ENCODE measurements at regions of chr19 and their contacts with region 1.

Region 1: DNA sequence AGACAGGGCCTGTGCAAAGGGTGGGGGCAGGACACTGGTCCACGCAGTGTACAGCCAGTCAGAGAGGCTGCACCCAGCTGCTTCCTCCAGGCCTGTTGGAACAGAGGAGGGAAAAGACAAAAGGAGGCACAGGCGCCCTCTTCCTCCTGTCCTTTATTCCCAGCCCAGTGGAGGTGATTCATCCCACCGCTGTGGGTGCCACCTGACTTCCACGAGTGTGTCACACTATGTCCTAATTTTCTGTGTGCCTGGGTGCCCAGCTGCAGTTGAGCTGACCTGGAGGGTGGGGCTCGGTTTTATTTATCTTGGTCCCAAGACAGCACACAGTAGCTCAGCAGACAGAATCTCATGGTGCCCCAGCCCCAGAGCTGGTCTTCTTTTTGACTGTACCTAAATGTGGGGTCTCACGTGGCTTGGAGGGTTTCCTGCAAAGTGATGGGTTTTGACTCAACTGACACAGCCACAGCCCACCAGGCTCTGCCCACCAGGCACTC is 9.0 kb downstream of the EPS15L1 start:
- DNase-seq: no peak
- H3K4me3 ChIP-seq: no peak overlapping the region
- H3K27ac ChIP-seq: no peak overlapping the region
- H3K4me1 ChIP-seq: peaks cover 10% of the 10 kb centered on the region
- H3K27me3 ChIP-seq: no peaks in the 10 kb centered on the region
- CTCF ChIP-seq: no peak
- POLR2A ChIP-seq: no peak

Region 2: DNA sequence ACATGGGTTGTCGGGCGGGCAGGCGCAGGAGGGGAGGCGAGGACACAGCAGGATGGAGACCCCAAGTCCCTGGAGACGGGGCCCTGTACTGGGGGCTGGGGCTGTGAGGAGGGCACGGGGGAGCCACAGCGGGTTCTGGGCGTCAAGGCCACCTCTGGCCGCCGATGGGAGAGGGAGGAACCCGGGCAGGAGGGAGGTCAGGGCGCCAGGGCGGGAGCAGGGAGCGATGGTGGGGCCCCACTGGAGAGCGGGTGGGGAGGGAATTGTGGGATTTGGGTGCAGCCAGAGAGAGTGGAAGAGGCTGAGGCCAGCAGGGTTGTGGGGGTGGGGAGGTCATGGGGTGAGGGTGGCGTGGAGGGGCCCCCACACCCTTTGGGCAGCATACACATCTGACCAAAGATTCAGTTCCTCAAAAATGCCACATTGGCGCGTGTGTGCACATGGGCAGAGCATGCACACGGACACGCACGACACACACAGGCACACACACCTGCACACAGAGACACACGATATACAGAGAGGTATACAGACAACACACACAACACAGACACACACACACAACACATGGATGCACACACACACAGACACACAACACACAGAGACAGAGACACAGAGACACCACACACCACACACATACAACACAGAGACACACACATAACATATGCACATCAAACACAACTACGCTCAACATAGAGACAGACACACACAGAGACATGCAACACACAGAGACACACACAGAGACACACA is 210.2 kb before region 1 on chr19:
- CTCF ChIA-PET with region 1: no interaction called
- POLR2A ChIA-PET with region 1: no interaction called
- dilution Hi-C with region 1: no loop called
- intact Hi-C with region 1: no loop called
- DNase-seq: no peak
- H3K4me3 ChIP-seq: no peak overlapping the region
- H3K27ac ChIP-seq: no peak overlapping the region
- H3K4me1 ChIP-seq: no peaks in the 10 kb centered on the region
- H3K27me3 ChIP-seq: no peaks in the 10 kb centered on the region
- CTCF ChIP-seq: no peak
- POLR2A ChIP-seq: no peak

Region 3: DNA sequence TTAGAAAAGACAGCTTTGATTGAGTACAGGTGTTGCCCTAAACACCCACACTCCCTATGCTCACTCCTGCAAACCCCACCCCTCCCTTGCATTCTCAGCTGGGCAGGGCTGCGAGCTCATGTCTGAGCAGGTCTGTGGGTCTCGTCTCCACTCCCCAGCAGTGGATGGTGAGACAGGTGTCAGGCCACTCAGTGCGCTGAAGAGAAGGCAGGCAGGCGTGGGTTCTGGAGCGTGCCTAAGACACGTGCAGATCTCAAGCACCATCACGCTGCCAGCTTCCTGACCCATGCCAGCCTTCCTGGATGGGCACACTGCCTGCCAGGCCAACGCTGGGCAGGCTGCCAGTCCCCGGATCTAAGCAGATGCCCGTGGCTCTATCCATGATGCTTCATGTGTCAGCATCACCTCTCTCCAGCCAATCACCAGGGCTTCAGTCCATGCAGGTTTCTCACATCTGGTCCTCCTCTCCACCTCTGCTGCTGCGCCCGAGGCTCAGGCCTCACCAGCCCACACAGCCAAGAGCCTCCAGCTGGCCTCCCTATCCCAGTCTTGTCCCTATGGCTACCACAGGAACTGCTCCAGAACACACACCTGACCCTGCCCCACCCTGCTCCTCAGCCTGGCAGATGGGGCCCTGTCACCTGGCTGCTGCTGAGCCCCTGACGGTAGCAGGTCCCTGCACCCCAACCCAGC is 33.6 kb before region 1 on chr19:
- CTCF ChIA-PET with region 1: no interaction called
- POLR2A ChIA-PET with region 1: no interaction called
- dilution Hi-C with region 1: no loop called
- intact Hi-C with region 1: no loop called
- DNase-seq: peak; percentile 21
- H3K4me3 ChIP-seq: no peak overlapping the region
- H3K27ac ChIP-seq: no peak overlapping the region
- H3K4me1 ChIP-seq: peaks cover 9% of the 10 kb centered on the region
- H3K27me3 ChIP-seq: no peaks in the 10 kb centered on the region
- CTCF ChIP-seq: no peak
- POLR2A ChIP-seq: no peak

Region 4: DNA sequence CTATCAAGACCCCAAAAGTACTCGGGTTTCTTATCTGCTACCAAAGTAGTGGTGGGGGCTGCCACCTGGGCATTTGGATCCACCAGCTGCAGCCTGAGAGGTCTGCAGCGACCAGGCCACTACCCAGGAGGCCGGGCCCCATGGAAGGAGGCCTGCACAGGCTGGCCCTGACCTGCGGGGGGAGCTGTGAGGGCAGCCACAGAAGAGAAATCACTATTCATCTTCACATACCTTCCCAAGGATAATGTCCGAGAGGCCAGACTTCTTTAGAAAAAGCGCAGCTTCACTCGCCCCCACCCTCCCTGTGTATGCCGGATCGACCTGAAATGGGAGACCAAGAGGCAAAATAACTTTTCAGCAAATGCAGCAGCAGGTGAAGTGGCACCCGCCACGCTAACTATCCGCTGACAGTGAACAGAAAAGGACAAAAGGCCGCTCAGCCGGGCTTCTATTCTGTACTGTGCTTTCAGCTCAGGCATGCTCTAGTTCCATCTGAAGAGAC is 21.1 kb before region 1 on chr19:
- CTCF ChIA-PET with region 1: interaction called, 18 read pairs
- POLR2A ChIA-PET with region 1: no interaction called
- dilution Hi-C with region 1: no loop called
- intact Hi-C with region 1: no loop called
- DNase-seq: peak; percentile 38
- H3K4me3 ChIP-seq: no peak overlapping the region
- H3K27ac ChIP-seq: no peak overlapping the region
- H3K4me1 ChIP-seq: peaks cover 32% of the 10 kb centered on the region
- H3K27me3 ChIP-seq: no peaks in the 10 kb centered on the region
- CTCF ChIP-seq: peak; percentile 71 to 74
- POLR2A ChIP-seq: no peak

Region 5: DNA sequence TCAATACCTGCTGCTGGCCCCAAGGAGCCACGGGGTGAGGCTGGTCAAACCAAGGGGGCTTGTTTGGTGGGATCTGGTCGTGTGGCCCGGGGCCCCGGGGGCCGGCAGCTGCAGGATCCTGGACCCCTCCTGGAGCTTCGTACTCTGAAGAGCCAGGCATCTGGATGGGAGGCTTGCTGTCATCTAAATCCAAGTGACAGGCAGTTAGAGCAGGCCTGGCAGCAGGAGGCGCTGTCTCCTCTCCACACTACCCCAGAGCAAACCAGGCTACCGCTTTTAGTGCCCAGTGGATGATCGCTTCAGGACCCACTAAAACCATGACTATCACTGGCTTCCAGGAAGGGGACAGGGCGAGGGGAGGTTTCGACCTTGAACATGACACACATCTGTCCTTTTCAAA is 65.3 kb after region 1 on chr19:
- CTCF ChIA-PET with region 1: no interaction called
- POLR2A ChIA-PET with region 1: no interaction called
- dilution Hi-C with region 1: no loop called
- intact Hi-C with region 1: no loop called
- DNase-seq: peak; percentile 17
- H3K4me3 ChIP-seq: no peak overlapping the region
- H3K27ac ChIP-seq: no peak overlapping the region
- H3K4me1 ChIP-seq: no peaks in the 10 kb centered on the region
- H3K27me3 ChIP-seq: no peaks in the 10 kb centered on the region
- CTCF ChIP-seq: peak; percentile 52 to 53
- POLR2A ChIP-seq: no peak